Spleen (tissue), 13 donors: ENCODE measurements at regions of chr10 and their contacts with region 1.

Region 1: DNA sequence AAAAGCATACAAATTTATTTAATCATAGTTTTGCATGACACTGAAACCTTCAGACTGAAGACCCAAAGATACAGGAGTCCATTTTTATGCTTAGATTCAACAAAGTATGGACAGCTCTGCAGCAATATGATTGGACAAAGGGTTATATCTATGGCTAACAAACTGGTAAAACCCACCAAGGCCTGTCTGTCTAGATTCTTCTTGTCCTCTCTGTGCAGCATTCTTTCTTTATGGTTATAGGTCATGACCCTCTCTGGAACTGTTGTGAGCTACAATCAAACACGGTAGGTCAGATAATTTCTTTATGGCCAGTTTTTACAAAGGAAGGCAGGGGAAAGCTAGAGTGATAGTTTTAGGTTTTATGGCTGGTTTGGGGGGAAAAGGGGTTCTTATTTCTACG is 4.1 kb downstream of the RNLS start:
- DNase-seq: no peak
- H3K4me3 ChIP-seq: no peak overlapping the region
- H3K27ac ChIP-seq: no peak overlapping the region
- H3K4me1 ChIP-seq: peaks cover 5 to 17% (median 14%) of the 10 kb centered on the region in 6 donors
- H3K27me3 ChIP-seq: no peaks in the 10 kb centered on the region
- CTCF ChIP-seq: no peak
- POLR2A ChIP-seq: no peak

Region 2: GRCh38 chr10:88800152-88801125 is 221.4 kb after region 1 on chr10:
- intact Hi-C with region 1: loop called (anchors 10 kb)
- DNase-seq: no peak
- H3K4me3 ChIP-seq: no peak overlapping the region
- H3K27ac ChIP-seq: no peak overlapping the region
- H3K4me1 ChIP-seq: no peaks in the 10 kb centered on the region
- H3K27me3 ChIP-seq: no peaks in the 10 kb centered on the region
- CTCF ChIP-seq: no peak
- POLR2A ChIP-seq: no peak